ENCODE measurements at regions of chr11 and their contacts with region 1.

Region 1: DNA sequence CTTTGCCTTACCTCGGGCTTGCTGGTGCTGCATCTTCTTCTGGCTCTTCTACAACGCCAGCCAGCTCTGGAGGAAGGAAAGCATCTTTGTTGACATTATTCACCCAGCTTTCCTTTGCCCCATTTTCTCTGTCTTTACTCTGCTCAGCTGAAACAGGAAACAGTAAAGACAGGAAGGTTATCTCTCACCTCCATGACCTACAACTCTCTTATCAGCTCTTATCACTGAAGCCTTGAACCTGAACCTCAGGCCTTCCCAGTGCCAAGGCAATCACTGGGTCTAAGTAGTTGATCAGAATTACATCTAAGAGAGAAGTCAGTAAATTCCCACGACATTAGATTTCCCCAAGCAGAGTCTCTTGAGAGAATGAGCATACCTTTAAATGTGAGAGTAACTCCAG is 59.6 kb upstream of the CCDC89 start:
- DNase-seq: no peak
- H3K4me3 ChIP-seq: no peak overlapping the region
- CTCF ChIP-seq: no peak
- POLR2A ChIP-seq: no peak

Region 2: GRCh38 chr11:85768473-85769146 is 23.0 kb after region 1 on chr11:
- intact Hi-C with region 1: loop called (anchors 1 kb)
- DNase-seq: no peak
- H3K4me3 ChIP-seq: no peak overlapping the region
- CTCF ChIP-seq: no peak
- POLR2A ChIP-seq: no peak